Activated B cell treated with CpG ODN at 0.5 μM for 24 hours (primary cell): ENCODE measurements at regions of chr10 and their contacts with region 1.

Region 1: DNA sequence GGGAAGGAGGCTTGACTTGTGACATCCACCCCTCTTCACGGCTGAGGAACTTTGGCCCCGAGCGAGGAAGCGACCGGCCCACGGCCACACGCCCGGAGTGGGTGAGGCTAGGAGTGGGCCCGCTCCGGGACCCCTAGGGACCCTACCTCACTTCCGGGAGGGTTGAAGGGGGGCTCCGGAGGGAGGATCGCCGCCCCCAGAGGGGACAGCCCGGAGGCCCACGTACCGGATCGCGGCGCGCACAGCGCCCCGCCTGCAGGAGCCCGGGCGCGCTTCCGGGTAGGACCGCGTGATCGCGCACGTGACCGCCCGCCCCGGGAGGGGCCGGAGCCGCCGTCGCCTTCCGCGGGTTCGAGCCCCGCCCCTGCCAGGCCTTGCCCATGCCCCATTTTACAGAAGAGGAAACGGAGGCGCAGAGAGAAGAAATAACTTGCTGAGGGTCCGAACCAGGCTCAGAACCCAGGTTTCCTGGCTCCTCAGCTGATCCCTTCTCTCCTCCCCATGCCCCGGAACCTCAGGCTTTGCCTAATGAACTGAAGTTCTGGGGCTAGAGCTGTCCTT is at the start of gene HPS1:
- DNase-seq: peak; percentile 93
- ATAC-seq: peak; percentile 92
- H3K4me3 Mint-ChIP-seq: peak within 1 kb of the TSS; percentile 92
- H3K27ac Mint-ChIP-seq: peak within 1 kb of the TSS; percentile 96
- H3K4me1 Mint-ChIP-seq: peaks cover 56% of the 10 kb centered on the region
- H3K27me3 Mint-ChIP-seq: no peaks in the 10 kb centered on the region
- CTCF ChIP-seq: no peak
- total RNA-seq, gene HPS1: 104 and 106 TPM in 2 replicates

Region 2: GRCh38 chr10:97640174-97640867 is 806.4 kb before region 1 on chr10 and contains the start of gene PI4K2A:
- CTCF ChIA-PET with region 1: no interaction called
- POLR2A ChIA-PET with region 1: no interaction called
- intact Hi-C with region 1: loop called (anchors 2 kb)
- DNase-seq: peak; percentile 92
- ATAC-seq: peak; percentile 96
- H3K4me3 Mint-ChIP-seq: peak within 1 kb of the TSS; percentile 97
- H3K27ac Mint-ChIP-seq: peak within 1 kb of the TSS; percentile 90
- H3K4me1 Mint-ChIP-seq: peaks cover 23% of the 10 kb centered on the region
- H3K27me3 Mint-ChIP-seq: no peaks in the 10 kb centered on the region
- CTCF ChIP-seq: no peak
- total RNA-seq, gene PI4K2A: 15.0 and 15.1 TPM in 2 replicates

Region 3: DNA sequence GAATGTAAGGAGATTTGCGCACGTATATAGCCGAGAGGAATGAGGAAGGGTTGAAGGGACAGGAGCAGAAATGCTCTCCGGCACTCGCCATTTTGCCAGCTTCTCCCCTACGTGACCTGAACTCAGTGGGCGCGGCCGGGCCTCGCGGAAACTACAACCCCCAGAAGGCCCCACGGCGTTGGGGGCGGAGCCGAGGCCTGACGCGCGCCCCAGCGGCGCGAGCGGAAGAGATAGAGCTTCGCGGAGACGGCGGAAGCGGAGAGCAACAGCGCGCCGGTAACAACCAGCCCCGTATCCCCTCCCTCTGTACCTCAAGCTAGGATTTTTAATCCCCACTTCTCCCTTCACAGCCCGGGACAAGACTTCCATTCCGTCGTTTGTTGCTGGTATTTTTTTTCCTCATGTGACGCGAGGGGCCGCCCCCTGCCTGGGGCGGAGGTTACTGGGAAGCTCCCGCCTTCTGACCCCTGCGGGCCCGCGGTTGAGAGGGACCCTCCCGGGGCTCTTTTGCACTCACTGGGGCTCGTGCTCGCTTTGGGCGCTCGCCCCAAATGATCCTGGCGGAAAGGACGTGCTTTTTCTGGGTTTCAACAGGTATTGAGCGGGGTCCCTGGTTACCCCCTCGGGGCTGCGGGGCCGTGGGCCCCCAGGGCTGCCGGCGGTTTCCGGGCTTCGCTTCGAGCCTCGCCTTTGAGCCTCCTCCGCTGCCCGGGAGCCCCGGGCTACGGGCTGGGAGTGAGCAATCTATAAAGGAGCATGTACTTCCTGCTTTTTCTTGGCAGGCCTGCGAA is 312.1 kb before region 1 on chr10 and contains the start of gene R3HCC1L:
- CTCF ChIA-PET with region 1: no interaction called
- POLR2A ChIA-PET with region 1: interaction called, 10 read pairs
- intact Hi-C with region 1: loop called (anchors 1 kb)
- DNase-seq: peak; percentile 93
- ATAC-seq: peak; percentile 91
- H3K4me3 Mint-ChIP-seq: peak within 1 kb of the TSS; percentile 94
- H3K27ac Mint-ChIP-seq: peak within 1 kb of the TSS; percentile 97
- H3K4me1 Mint-ChIP-seq: peaks cover 63% of the 10 kb centered on the region
- H3K27me3 Mint-ChIP-seq: no peaks in the 10 kb centered on the region
- CTCF ChIP-seq: no peak
- total RNA-seq, gene R3HCC1L: 24.4 and 24.9 TPM in 2 replicates

Region 4: DNA sequence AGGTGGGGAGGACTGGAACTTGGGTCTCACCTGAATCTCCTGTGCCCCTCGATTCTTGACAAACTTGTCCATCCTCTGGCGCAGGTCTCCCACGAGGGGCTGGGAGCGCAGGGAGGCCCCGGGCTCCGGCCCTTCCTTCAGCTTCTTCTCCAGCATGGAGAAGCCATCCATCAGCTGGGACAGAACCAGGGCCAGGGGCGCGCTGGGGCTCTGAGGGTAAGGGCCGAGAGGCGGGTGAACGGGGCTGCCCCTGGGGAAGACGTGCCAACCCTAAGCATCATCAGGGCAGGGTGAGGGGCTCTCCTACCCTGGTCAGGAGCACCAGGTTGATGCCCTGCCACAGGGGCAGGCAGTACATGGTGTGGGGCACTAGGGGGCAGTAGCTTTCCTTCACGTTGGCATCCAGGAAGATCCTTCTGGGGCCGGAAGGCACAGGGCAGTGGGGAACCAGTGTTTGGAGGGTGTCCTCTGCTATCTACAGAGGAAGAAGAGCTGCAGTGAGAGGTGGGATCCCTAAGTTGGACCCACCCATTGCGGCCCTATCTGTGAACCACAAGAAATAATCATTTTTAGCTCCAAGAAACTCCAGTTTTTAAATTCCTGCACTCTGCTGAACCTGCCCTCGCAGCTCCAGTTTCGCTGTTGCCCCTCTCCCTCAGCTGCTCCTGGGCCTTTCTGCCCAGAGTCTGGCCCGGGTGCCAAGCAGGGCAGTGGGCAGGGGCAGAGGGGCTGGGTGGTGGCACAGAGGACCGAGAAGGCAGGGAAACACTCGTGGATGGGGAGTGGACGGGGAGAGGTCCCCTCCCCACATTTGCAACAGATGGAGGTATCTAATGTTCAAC is 21.0 kb before region 1 on chr10:
- CTCF ChIA-PET with region 1: interaction called, 7 read pairs
- POLR2A ChIA-PET with region 1: interaction called, 3 read pairs
- intact Hi-C with region 1: loop called (anchors 1 kb)
- DNase-seq: no peak
- ATAC-seq: peak; percentile 85
- H3K4me3 Mint-ChIP-seq: no peak overlapping the region
- H3K27ac Mint-ChIP-seq: no peak overlapping the region
- H3K4me1 Mint-ChIP-seq: peaks cover 6% of the 10 kb centered on the region
- H3K27me3 Mint-ChIP-seq: no peaks in the 10 kb centered on the region
- CTCF ChIP-seq: no peak

Region 5: GRCh38 chr10:99430451-99431189 is 983.9 kb after region 1 on chr10 and contains the start of gene GOT1:
- CTCF ChIA-PET with region 1: no interaction called
- POLR2A ChIA-PET with region 1: interaction called, 4 read pairs
- intact Hi-C with region 1: loop called (anchors 1 kb)
- DNase-seq: peak; percentile 85
- ATAC-seq: peak; percentile 91
- H3K4me3 Mint-ChIP-seq: peak within 1 kb of the TSS; percentile 98
- H3K27ac Mint-ChIP-seq: peak within 1 kb of the TSS; percentile 92
- H3K4me1 Mint-ChIP-seq: peaks cover 29% of the 10 kb centered on the region
- H3K27me3 Mint-ChIP-seq: no peaks in the 10 kb centered on the region
- CTCF ChIP-seq: no peak
- total RNA-seq, gene GOT1: 30.1 and 31.4 TPM in 2 replicates

Region 6: DNA sequence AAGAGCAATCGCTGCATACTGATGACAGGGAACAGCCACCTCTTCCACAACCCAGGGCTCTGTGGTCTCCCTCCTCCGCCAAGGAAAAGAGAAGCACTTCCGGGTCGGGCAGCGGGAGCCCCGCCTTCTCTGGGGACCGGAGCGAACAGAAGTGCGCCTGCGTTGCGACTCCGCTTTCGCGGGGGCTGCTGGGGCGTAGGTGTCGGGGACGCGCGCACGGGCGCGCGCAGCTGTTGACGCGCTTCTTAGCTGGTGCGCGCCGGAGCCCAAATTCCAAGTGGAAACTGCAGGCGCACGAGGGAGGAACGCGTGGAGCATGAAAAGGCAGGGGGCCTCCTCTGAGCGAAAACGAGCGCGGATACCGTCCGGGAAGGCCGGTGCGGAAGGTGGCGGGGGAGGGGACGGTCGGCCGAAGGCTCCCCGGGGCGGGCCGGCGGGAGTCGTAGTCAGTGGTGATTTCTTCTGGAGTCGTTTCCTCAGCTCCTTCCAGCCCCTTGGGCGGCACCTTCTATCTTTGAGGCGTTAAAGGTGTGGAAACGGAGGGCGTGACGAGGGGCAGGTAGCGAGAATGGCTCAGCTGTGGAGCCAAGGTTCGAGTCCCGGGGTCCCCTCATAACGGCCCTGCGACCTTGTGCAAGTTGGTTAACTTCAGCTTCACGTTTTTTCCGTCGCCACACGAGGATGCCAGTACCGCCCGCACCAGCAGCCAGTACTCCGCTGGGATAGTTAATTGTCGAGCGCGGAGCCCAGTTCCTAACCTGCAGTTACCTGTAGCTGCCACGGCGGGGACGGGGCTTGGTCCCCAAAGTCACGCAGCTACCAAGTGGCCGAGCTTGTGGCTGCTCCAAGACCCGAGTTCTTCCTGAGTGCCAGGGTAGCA is 1285.5 kb after region 1 on chr10 and contains the starts of genes COX15 and CUTC:
- CTCF ChIA-PET with region 1: no interaction called
- POLR2A ChIA-PET with region 1: interaction called, 3 read pairs
- intact Hi-C with region 1: loop called (anchors 1 kb)
- DNase-seq: peak; percentile 91
- ATAC-seq: peak; percentile 88
- H3K4me3 Mint-ChIP-seq: peak within 1 kb of the TSS; percentile 100
- H3K27ac Mint-ChIP-seq: peak within 1 kb of the TSS; percentile 99
- H3K4me1 Mint-ChIP-seq: peaks cover 31% of the 10 kb centered on the region
- H3K27me3 Mint-ChIP-seq: no peaks in the 10 kb centered on the region
- CTCF ChIP-seq: no peak
- total RNA-seq, gene COX15: 39.8 and 44.5 TPM in 2 replicates
- total RNA-seq, gene CUTC: 25.4 and 27.5 TPM in 2 replicates